Activated CD8-positive, alpha-beta memory T cell treated with anti-CD3 and anti-CD28 coated beads, Interleukin-2, amount 10 ng/mL, durations not matched to agents 7 days and 5 days (primary cell): ENCODE measurements at regions of chr12 and their contacts with region 1.

Region 1: GRCh38 chr12:106282457-106283097 is 20.0 kb upstream of the TCP11L2 start:
- DNase-seq: peak; percentile 50
- ATAC-seq: peak; percentile 70
- H3K4me3 Mint-ChIP-seq: no peak overlapping the region
- H3K27ac Mint-ChIP-seq: no peak overlapping the region
- H3K4me1 Mint-ChIP-seq: peaks cover 6% of the 10 kb centered on the region
- H3K27me3 Mint-ChIP-seq: peaks cover 21% of the 10 kb centered on the region

Region 2: DNA sequence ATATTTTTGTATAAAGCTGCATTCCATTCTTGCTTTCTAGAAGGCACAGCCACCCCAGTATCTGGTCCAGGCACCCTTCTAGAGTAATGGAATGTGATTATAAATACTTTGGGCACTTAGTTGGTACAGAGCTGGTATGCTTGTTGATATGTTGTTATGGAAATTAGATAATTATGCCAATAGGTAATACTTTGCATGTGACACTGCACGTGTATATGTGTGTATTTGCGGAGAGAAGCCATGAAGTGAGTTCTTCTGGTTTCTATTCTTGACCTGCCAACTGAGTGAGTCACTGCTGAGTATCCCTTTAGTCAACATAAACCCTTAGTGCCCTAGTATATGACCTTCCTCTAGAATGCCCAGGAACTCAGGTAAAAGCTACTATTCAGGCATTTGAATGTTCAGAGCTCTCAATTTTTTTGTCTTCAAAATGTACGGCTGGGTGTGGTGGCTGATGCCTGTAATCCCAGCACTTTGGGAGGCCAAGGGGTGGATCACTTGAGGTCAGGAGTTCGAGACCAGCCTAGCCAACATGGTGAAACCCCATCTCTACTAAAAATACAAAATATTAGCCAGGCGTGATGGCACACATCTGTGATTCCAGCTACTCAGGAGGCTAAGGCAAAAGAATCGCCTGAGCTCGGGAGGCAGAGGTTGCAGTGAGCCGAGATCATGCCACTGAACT is 13.8 kb after region 1 on chr12:
- CTCF ChIA-PET with region 1: interaction called, 16 read pairs
- DNase-seq: no peak
- ATAC-seq: no peak
- H3K4me3 Mint-ChIP-seq: no peak overlapping the region
- H3K27ac Mint-ChIP-seq: no peak overlapping the region
- H3K4me1 Mint-ChIP-seq: peaks cover 10% of the 10 kb centered on the region
- H3K27me3 Mint-ChIP-seq: no peaks in the 10 kb centered on the region